HCT116 (cell line): ENCODE measurements at regions of chrX and their contacts with region 1.

Region 1: GRCh38 chrX:74382613-74383012 is 38.7 kb upstream of the SLC16A2 start:
- DNase-seq: peak; percentile 41
- ATAC-seq: peak; percentile 94
- H3K4me3 ChIP-seq: no peak overlapping the region
- H3K27ac ChIP-seq: no peak overlapping the region
- H3K4me1 ChIP-seq: no peaks in the 10 kb centered on the region
- H3K27me3 ChIP-seq: no peaks in the 10 kb centered on the region
- CTCF ChIP-seq: peak; percentile 41 to 77 (median 66); a peak in 5 of 6 replicates
- POLR2A ChIP-seq: no peak
- RAD21 ChIP-seq: peak; percentile 60

Region 2: DNA sequence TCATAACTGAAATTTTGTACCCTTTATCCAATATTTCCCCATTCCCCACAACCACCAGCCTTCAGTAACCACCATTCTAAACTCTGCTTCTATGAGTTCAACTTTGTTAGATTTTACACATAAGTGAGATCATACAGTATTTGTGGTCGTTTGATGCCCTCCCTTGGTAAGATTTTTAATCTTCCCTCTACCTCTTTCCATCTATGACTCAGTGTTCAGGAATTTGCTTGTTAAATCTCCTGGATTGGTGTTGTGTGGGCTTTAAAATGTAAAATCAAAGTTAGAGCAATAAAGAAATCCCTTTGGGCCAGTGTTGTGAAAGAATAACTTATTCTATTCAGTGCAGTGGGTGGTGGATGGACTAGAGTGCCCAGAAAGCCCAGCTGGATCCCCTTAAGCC is 76.1 kb after region 1 on chrX:
- CTCF ChIA-PET with region 1: no interaction called
- POLR2A ChIA-PET with region 1: no interaction called
- RAD21 ChIA-PET with region 1: no interaction called
- intact Hi-C with region 1: loop called (anchors 5 kb)
- DNase-seq: no peak
- ATAC-seq: peak; percentile 74
- H3K4me3 ChIP-seq: no peak overlapping the region
- H3K27ac ChIP-seq: no peak overlapping the region
- H3K4me1 ChIP-seq: peaks cover 2 to 5% of the 10 kb centered on the region in 2 experiments; a peak in 2 of 4 replicates
- H3K27me3 ChIP-seq: no peaks in the 10 kb centered on the region
- CTCF ChIP-seq: 0 out of 6 replicates have a peak, but pooled peaks of 2 of the 3 experiments have one; percentile 10 to 15
- POLR2A ChIP-seq: no peak
- RAD21 ChIP-seq: peak; percentile 54

Region 3: DNA sequence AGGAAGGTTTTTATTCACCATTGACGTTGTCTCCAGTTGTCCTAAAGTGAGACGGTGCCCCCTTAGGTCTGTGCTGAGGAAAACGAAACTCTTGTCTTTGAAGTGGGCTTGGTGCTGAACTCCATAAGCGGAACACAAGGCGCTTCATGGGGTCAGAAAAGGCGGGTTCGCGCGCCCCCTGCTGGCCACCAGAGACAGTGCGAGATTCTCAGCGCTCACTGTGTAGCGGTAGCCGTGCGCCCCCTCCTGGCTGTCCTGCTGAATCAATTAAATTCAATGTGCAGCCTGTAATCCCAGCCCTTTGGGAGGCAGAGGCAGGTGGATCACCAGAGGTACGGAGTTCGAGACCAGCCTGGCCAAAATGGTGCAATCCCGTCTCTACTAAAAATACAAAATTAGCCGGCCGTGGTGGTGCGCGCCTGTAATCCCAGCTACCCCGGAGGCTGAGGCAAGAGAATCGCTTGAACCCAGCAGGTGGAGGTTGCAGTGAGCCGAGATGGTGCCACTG is 167.7 kb after region 1 on chrX:
- CTCF ChIA-PET with region 1: no interaction called
- POLR2A ChIA-PET with region 1: no interaction called
- RAD21 ChIA-PET with region 1: no interaction called
- intact Hi-C with region 1: loop called (anchors 1 kb)
- DNase-seq: peak; percentile 51
- ATAC-seq: peak; percentile 93
- H3K4me3 ChIP-seq: no peak overlapping the region
- H3K27ac ChIP-seq: no peak overlapping the region
- H3K4me1 ChIP-seq: no peaks in the 10 kb centered on the region
- H3K27me3 ChIP-seq: no peaks in the 10 kb centered on the region
- CTCF ChIP-seq: peak; percentile 86 to 99 (median 91)
- POLR2A ChIP-seq: no peak
- RAD21 ChIP-seq: peak; percentile 90

Region 4: DNA sequence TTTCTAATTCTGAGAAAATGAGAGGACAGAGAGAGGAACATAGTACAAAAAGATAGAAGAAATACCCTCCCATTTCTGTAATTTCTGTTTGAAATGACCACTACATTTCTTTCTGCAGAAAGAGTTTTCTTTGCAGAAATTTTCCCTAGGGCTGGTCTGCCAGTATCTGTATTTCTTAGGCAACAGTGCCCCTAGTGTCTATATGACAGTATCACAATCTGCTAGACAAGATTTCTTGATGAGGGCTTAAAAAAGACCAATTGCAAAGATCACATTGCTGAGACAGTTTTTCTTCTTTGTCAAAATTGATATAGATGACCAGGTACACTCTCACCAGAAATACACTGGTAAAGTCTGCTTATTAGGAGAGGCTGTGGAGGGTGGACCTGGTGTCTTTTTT is 1221.2 kb after region 1 on chrX:
- CTCF ChIA-PET with region 1: no interaction called
- POLR2A ChIA-PET with region 1: no interaction called
- RAD21 ChIA-PET with region 1: no interaction called
- intact Hi-C with region 1: loop called (anchors 10 kb)
- DNase-seq: no peak
- ATAC-seq: no peak
- H3K4me3 ChIP-seq: no peak overlapping the region
- H3K27ac ChIP-seq: no peak overlapping the region
- H3K4me1 ChIP-seq: no peaks in the 10 kb centered on the region
- H3K27me3 ChIP-seq: no peaks in the 10 kb centered on the region
- CTCF ChIP-seq: peak in 2 of 3 experiments; percentile 17 to 51; a peak in 2 of 6 replicates
- POLR2A ChIP-seq: no peak
- RAD21 ChIP-seq: peak; percentile 51